GM10248 (cell line): ENCODE measurements at regions of chr13 and their contacts with region 1.

Region 1: DNA sequence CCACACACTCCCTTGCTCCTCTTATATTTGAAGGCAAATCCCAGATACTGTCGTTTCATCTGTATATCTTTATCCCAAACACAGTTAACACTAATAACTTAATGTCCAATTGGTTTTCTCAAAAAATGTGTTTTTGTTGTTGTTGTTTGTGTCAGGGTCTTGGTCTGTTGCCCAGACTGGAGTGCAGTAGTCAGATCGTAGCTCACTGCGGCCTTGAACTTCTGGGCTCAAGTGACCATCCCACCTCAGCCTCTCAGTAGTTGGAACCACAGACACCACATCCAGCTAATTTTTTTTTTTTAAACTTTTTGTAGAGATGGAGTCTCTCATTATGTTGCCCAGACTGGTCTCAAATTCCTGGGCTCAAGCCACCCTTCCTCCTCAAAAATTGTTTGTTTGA is 137.7 kb downstream of the PDS5B start:
- DNase-seq: no peak
- CTCF ChIP-seq: no peak

Region 2: DNA sequence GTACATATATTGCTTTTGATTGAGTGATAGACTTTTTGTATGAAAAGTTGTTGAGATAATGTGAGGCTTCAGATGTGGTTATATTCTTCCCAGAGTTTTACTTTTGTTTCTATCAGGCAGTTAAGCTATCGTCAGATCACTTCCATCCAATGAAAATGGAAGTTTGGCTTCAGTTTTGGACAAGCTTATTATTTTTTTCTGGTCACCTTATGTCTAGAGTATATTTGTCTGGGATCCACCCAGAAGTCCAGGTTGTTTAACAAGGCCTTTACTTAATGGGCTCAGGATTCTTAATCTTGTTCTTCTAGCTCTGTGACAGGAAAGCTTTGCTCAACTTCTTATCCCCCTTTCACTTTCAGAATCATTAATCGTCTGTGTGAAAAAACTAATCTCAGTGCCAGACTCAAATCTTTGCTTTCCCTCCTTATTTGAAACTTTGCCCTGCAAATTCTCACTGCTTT is 13.2 kb after region 1 on chr13:
- CTCF ChIA-PET with region 1: interaction called, 19 read pairs
- POLR2A ChIA-PET with region 1: no interaction called
- DNase-seq: peak; percentile 26
- CTCF ChIP-seq: no peak